Activated T-helper 2 cell treated with anti-CD3 and anti-CD28 coated beads, Interferon-gamma antibody, Interleukin-2, Interleukin-4, amounts not matched to agents 10 μg/mL and 5 μg/mL and 100 μg/mL, durations not matched to agents 14 hours and 24 hours and 36 hours (primary cell): ENCODE measurements at regions of chr16 and their contacts with region 1.

Region 1: GRCh38 chr16:69166221-69166833 is 20.6 kb upstream of the SNTB2 start:
- DNase-seq: peak; percentile 33
- H3K4me3 Mint-ChIP-seq: peak overlapping the region; percentile 13
- H3K27ac Mint-ChIP-seq: peak overlapping the region; percentile 93
- H3K4me1 Mint-ChIP-seq: peaks cover 52% of the 10 kb centered on the region
- H3K27me3 Mint-ChIP-seq: no peaks in the 10 kb centered on the region

Region 2: DNA sequence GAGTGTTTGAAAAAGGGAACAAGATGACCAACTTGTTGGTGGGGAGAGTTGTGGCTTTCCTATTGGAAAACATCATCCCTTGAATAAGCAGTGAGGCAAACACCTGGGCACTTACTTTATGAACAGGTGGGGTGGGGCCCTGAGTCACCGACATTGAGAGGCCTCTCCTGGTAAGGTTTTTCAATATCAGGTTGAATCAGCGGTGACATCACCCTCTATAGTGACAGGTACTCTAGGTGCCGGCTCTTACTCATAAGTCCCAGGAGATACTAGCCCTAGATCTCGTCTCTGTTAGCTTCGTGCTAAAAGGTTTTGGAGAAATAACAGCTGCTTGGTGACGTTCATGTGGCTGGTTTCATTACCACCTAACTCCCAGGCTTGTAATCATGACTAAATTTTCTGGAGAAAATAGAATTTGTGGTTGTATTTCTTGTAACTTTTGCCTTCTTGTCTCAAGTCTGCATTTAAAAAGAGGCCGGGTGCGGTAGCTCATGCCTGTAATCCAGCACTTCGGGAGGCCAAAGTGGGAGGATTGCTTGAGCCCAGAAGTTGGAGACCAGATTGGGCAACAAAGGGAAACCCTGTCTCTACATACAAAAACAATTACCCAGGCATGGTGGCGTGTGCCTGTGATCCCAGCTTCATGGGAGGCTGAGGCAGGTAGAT is 409.9 kb before region 1 on chr16:
- intact Hi-C with region 1: loop called (anchors 1 kb)
- DNase-seq: peak; percentile 55
- H3K4me3 Mint-ChIP-seq: peak overlapping the region; percentile 9
- H3K27ac Mint-ChIP-seq: peak overlapping the region; percentile 89
- H3K4me1 Mint-ChIP-seq: peaks cover 63% of the 10 kb centered on the region
- H3K27me3 Mint-ChIP-seq: no peaks in the 10 kb centered on the region

Region 3: GRCh38 chr16:69132424-69133252 is 33.7 kb before region 1 on chr16 and contains the starts of genes CHTF8 and UTP4:
- intact Hi-C with region 1: loop called (anchors 1 kb)
- DNase-seq: peak; percentile 86
- H3K4me3 Mint-ChIP-seq: peak within 1 kb of the TSS; percentile 97
- H3K27ac Mint-ChIP-seq: peak within 1 kb of the TSS; percentile 89
- H3K4me1 Mint-ChIP-seq: peaks cover 44% of the 10 kb centered on the region
- H3K27me3 Mint-ChIP-seq: no peaks in the 10 kb centered on the region
- total RNA-seq, gene CHTF8: 121 and 138 TPM in 2 replicates
- total RNA-seq, gene UTP4: 104 and 107 TPM in 2 replicates

Region 4: GRCh38 chr16:69186642-69187445 is 20.5 kb after region 1 on chr16 and contains the start of gene SNTB2:
- intact Hi-C with region 1: loop called (anchors 1 kb)
- DNase-seq: peak; percentile 81
- H3K4me3 Mint-ChIP-seq: peak within 1 kb of the TSS; percentile 92
- H3K27ac Mint-ChIP-seq: peak within 1 kb of the TSS; percentile 98
- H3K4me1 Mint-ChIP-seq: peaks cover 47% of the 10 kb centered on the region
- H3K27me3 Mint-ChIP-seq: no peaks in the 10 kb centered on the region
- total RNA-seq, gene SNTB2: 29.8 and 30.4 TPM in 2 replicates

Region 5: GRCh38 chr16:69204172-69204571 is 37.8 kb after region 1 on chr16:
- intact Hi-C with region 1: loop called (anchors 1 kb)
- DNase-seq: no peak
- H3K4me3 Mint-ChIP-seq: no peak overlapping the region
- H3K27ac Mint-ChIP-seq: peak overlapping the region; percentile 87
- H3K4me1 Mint-ChIP-seq: peaks cover 19% of the 10 kb centered on the region
- H3K27me3 Mint-ChIP-seq: no peaks in the 10 kb centered on the region

Region 6: DNA sequence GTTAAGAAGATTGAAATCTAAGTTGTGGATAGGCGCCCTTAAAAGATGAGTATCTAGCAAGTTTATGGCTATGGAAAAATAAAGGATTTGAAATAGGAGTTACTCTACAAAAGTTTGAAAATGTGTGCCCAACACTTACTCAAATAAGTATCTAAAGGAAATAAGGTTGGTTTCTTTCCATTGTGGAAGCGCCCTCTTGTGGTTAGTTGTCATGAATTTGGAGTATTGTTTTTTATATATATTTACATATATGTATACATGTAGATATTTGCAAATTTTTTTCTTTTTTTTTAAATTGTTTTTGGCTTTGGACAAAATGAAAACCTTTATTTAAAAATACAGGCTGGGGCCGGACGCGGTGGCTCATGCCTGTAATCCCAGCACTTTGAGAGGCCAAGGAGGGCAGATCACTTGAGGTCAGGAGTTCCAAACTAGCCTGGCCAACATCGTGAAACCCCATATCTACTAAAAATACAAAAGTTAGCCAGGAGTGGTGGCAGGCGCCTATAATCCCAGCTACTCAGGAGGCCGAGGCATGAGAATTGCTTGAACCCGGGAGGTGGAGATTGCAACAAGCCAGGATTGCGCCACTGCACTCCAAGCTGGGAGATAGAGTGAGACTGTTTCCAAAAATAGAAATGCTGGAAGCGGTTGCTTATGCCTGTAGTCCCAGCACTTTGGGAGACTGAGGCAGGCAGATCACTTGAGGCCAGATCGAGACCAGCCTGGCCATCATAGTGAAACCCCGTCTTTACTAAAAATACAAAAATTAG is 120.8 kb after region 1 on chr16:
- intact Hi-C with region 1: loop called (anchors 1 kb)
- DNase-seq: no peak
- H3K4me3 Mint-ChIP-seq: no peak overlapping the region
- H3K27ac Mint-ChIP-seq: no peak overlapping the region
- H3K4me1 Mint-ChIP-seq: no peaks in the 10 kb centered on the region
- H3K27me3 Mint-ChIP-seq: no peaks in the 10 kb centered on the region